Sigmoid colon (tissue), 7 donors: ENCODE measurements at regions of chrX and their contacts with region 1.

Region 1: DNA sequence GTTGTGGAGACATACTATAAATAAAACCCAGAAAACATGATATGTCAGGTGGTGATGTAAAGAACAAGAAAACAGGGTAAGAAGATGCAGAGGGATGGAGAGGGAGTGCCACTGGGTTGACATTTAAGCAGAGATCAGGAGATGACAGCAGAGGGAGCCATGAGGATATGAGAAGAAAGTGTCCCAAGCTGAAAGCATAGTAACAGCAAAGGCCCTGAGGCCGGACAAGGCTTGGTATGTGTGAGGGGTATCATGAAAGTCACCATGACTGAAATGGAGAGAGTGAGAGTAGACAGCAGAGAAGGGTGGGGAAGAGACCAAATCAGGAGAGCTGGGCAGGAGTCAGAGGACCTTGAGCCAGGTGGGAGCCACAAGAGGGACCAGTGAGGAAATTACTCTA is 3.4 kb downstream of the GPKOW start:
- DNase-seq: no peak
- H3K4me3 ChIP-seq: no peak overlapping the region
- H3K27ac ChIP-seq: no peak overlapping the region
- H3K4me1 ChIP-seq: peaks cover 0 to 9% (median 6%) of the 10 kb centered on the region in 4 donors
- H3K27me3 ChIP-seq: no peaks in the 10 kb centered on the region
- CTCF ChIP-seq: no peak
- EP300 ChIP-seq: no peak
- POLR2A ChIP-seq: no peak

Region 2: DNA sequence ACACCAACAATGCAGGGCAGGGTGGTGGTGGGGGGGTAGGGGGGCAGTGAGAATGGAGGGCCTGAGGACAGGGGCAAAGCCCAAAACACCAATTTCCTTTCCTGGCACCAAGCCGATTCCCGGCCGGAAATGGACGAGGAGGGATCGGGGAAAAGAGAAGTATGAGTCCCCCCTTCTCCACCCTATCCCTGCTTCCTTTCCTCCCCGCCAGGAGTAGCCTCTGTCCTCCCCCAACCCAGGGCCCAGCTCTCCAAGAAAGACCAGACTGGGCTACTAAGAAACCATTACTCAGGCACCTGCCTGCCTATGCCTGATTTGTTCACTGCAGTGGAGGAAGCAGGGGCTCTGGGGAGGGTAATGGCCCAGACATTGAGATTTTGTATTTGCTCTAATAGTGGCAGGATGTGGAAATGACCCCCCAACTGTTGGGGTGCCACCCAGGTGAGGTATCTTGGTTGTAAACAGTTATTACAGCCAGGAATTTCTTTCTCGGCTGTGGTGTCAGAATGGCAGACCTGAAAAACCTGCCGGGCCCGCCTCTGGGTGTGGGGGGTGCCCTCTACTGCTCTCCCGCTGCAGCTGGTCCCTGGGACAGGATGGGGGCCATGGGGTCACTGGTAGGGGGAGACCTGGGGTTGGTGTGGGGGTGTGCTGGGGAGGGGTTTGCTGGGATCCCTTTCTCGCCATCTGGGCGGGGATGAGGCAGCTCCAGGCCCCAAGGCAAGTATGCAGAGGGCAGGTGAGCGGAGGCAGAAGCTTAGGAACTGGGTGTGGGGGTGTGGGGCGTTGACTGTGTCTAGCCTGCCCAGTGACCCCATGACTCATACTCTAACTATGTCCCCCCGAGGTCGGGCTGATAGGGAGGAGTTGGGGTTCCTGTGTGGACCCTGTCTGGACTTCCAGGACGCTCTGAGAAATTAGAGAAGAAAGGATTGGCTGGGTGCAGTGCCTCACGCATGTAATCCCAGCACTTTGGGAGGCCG is 60.6 kb before region 1 on chrX:
- intact Hi-C with region 1: loop called (anchors 10 kb)
- DNase-seq: no peak
- H3K4me3 ChIP-seq: no peak overlapping the region
- H3K27ac ChIP-seq: peak overlapping the region in 1 of 4 donors; percentile 12
- H3K4me1 ChIP-seq: peaks cover 0 to 1% (median 0%) of the 10 kb centered on the region in 4 donors
- H3K27me3 ChIP-seq: no peaks in the 10 kb centered on the region
- CTCF ChIP-seq: no peak
- EP300 ChIP-seq: no peak
- POLR2A ChIP-seq: no peak

Region 3: DNA sequence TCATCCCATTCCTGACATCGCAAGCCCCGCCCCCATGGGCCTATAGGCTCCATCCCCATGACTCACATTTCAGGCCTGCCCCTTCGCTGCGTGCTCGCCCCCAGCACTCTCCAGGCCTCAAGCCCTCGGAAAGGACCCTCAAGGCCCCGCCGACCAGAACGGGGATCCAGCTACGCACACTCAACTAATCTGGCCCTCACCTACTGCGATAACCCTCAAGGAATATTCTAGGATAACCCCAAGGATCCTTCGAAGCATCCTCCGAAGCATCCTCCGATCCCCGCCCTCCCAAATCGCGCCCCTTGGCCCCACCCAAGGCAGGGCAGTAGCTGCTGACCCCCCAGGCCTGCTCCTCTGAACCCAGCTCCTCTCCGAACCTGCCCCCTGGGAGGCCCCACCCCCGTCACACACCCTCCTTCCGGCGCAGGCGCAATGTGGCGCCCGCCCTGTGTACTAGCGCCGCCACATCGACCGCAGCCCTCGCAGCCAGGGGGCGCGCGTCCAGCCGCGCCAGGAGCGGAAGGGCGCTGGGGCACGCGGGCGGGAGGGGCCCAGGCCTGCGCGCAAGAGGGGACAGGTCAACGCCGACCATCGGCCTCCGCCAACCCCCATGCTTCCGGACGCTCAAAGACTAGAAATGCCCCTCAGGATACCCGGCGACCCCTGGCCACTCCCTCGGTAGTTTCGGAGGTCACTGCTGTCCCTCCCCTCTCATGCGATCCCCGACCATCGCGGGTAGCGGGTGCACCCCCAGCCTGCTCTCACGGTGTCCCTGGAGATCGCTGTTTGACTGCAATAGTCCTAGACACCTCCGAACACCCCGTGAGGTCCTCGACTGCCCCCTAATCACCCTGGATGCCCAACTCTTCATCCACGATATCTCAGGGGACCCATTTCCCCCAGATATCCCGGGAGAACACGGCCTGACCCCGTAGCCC is 36.1 kb after region 1 on chrX:
- intact Hi-C with region 1: loop called (anchors 5 kb)
- DNase-seq: peak; percentile 96
- H3K4me3 ChIP-seq: peak overlapping the region; percentile 43 to 56 (median 51)
- H3K27ac ChIP-seq: peak overlapping the region; percentile 92 to 97 (median 94)
- H3K4me1 ChIP-seq: no peaks in the 10 kb centered on the region
- H3K27me3 ChIP-seq: no peaks in the 10 kb centered on the region
- CTCF ChIP-seq: peak; percentile 32 to 67 (median 62)
- EP300 ChIP-seq: no peak
- POLR2A ChIP-seq: peak in 1 of 2 donors; percentile 22